Activated CD8-positive, alpha-beta T cell treated with anti-CD3 and anti-CD28 coated beads for 36 hours (primary cell): ENCODE measurements at regions of chr1 and their contacts with region 1.

Region 1: DNA sequence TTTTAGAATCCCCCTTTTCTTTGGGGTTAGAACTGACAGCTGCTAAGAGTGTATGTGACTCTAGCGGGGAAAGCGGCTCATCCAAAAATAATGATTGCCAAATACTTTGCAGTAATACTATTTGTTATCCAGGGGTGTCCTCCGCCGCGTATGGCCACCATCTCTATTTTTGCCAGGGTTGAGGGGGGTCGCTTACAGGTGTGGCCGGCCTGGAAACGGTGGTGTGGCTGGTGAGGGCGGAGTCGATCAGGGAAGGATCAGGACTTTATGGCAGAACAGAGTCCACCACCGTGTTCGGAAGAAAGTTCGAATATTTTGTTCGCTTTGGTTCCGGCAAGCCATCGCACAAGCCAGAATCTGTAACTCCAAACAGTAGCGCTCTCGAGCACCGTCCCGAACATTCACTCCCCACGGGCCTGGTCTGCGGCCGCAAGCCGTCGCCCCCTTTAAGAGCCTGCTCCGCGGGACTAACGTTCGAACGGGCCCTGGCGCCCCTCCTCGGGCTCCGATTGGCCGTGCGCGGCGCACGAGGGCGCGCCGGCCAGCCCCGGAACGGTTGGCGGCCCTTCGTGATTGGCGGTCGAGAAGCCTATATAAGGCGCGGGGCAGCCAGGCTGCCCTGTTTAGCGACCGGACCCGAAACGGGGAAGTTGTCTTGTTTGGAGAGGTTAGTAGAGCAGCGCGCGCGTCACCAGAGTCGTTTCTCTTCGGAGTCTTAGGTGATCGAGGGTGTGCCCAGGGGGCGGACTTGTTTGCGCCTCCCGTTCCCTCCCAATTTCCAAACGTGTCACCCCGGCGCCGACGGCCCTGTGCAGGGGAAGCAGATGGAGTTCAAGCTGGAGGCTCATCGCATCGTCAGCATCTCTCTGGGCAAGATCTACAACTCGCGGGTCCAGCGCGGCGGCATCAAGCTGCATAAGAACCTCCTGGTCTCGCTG is at the start of gene IER5:
- DNase-seq: peak; percentile 96
- ATAC-seq: peak; percentile 80
- H3K4me3 Mint-ChIP-seq: peak within 1 kb of the TSS; percentile 100
- H3K27ac Mint-ChIP-seq: peak within 1 kb of the TSS; percentile 100
- H3K4me1 Mint-ChIP-seq: peaks cover 40% of the 10 kb centered on the region
- H3K27me3 Mint-ChIP-seq: no peaks in the 10 kb centered on the region
- CTCF ChIP-seq: no peak
- total RNA-seq, gene IER5: 39.8 to 41.3 TPM

Region 2: GRCh38 chr1:180962178-180962577 is 126.2 kb before region 1 on chr1:
- CTCF ChIA-PET with region 1: no interaction called
- POLR2A ChIA-PET with region 1: no interaction called
- intact Hi-C with region 1: no loop called
- DNase-seq: peak; percentile 14
- ATAC-seq: no peak
- H3K4me3 Mint-ChIP-seq: no peak overlapping the region
- H3K27ac Mint-ChIP-seq: no peak overlapping the region
- H3K4me1 Mint-ChIP-seq: peaks cover 7% of the 10 kb centered on the region
- H3K27me3 Mint-ChIP-seq: no peaks in the 10 kb centered on the region
- CTCF ChIP-seq: no peak

Region 3: GRCh38 chr1:181033799-181034451 is 54.4 kb before region 1 on chr1 and contains the start of gene MR1:
- CTCF ChIA-PET with region 1: interaction called, 19 read pairs
- POLR2A ChIA-PET with region 1: interaction called, 23 read pairs
- intact Hi-C with region 1: no loop called
- DNase-seq: peak; percentile 40
- ATAC-seq: peak; percentile 96
- H3K4me3 Mint-ChIP-seq: peak within 1 kb of the TSS; percentile 93
- H3K27ac Mint-ChIP-seq: peak within 1 kb of the TSS; percentile 99
- H3K4me1 Mint-ChIP-seq: peaks cover 53% of the 10 kb centered on the region
- H3K27me3 Mint-ChIP-seq: no peaks in the 10 kb centered on the region
- CTCF ChIP-seq: no peak
- total RNA-seq, gene MR1: 15.7 to 16.7 TPM

Region 4: GRCh38 chr1:181062836-181063428 is 25.4 kb before region 1 on chr1:
- CTCF ChIA-PET with region 1: interaction called, 16 read pairs
- POLR2A ChIA-PET with region 1: interaction called, 27 read pairs
- intact Hi-C with region 1: no loop called
- DNase-seq: peak; percentile 80
- ATAC-seq: peak; percentile 93
- H3K4me3 Mint-ChIP-seq: peak overlapping the region; percentile 61
- H3K27ac Mint-ChIP-seq: peak overlapping the region; percentile 88
- H3K4me1 Mint-ChIP-seq: peaks cover 20% of the 10 kb centered on the region
- H3K27me3 Mint-ChIP-seq: no peaks in the 10 kb centered on the region
- CTCF ChIP-seq: no peak

Region 5: DNA sequence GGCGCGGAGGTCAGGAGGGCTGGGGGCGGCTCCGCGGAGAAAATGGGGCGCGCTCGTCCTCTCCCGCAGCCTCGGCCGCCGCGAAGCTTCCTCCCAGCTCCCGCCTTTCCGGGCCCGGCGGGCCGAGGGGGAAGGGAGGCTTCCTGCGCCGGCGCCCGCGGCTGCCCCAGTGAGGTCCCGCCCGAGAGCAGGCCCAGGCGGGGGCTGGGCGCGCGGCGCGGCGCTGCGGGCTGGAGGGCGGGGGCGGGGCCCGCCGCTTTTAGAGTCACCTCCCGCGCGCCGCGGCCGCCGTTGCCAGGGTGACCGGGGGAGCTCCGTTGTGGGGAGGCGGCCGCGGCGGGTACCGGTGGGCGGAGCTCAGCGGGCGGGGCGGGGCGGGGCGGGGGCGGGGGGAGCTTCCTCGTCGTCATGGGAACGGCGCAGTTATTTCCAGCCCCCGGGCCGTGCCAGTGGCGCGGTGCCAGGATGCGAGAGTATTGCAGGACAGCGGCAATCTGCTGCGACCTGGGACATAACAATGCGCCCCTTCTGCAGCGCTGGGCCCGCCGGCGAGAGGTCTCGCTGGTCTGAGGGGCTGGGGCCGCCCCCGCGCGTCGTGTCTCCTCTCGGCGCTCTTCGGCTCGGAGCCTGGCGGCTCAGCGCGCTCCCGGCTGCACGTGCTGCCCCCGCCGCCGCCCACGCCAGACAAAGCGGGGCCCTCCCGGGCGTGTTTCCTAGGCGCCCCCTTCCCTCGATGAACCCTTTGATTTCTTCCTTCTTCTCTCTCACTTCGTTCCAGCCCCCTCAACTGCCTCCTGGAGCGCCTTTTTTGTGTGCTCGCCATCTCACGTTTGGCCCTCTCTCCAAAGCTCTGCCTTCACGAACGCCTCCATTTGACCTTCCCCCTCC is 17.0 kb after region 1 on chr1:
- CTCF ChIA-PET with region 1: interaction called, 30 read pairs
- POLR2A ChIA-PET with region 1: interaction called, 209 read pairs
- intact Hi-C with region 1: no loop called
- DNase-seq: peak; percentile 92
- ATAC-seq: peak; percentile 83
- H3K4me3 Mint-ChIP-seq: peak overlapping the region; percentile 77
- H3K27ac Mint-ChIP-seq: peak overlapping the region; percentile 71
- H3K4me1 Mint-ChIP-seq: peaks cover 53% of the 10 kb centered on the region
- H3K27me3 Mint-ChIP-seq: peaks cover 11% of the 10 kb centered on the region
- CTCF ChIP-seq: no peak

Region 6: DNA sequence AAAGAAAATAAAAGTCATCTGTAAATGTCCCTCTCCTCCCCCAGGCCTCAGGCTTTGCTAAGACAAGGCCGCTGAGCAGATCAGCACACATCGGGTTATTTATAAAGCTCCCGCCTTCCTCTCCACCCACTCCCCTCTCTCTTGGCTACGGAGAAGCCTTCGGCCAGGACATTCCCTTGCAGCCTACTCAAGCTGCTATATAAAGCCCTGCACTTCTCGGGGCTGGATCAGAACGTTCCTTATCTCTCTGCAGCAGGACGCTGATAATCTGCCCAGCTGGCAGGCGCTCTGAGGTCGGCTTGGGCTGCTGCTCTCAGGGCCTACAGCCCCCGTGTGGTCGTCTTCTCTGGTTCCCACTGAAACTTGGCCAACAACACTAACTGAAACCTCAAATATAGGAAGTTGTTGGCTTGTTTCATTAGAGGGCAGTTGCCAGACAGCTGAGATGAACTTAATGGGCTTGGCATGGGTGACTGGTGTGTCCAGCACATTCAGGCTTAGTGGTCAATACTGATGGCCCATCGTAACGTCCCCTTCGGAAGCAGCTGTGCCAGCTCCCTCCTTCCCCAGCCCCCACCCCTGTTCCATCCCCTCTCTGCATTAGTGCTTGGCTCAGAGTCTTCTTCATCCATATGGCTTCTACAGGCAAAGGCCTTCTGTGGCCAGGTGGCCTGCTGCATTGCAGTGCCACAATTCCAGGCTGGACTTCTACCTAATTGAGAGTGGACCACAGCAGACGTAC is 64.7 kb after region 1 on chr1:
- CTCF ChIA-PET with region 1: interaction called, 7 read pairs
- POLR2A ChIA-PET with region 1: interaction called, 28 read pairs
- intact Hi-C with region 1: no loop called
- DNase-seq: no peak
- ATAC-seq: no peak
- H3K4me3 Mint-ChIP-seq: no peak overlapping the region
- H3K27ac Mint-ChIP-seq: no peak overlapping the region
- H3K4me1 Mint-ChIP-seq: peaks cover 38% of the 10 kb centered on the region
- H3K27me3 Mint-ChIP-seq: peaks cover 2% of the 10 kb centered on the region
- CTCF ChIP-seq: no peak